ENCODE measurements at regions of chr9 and their contacts with region 1.

Region 1: DNA sequence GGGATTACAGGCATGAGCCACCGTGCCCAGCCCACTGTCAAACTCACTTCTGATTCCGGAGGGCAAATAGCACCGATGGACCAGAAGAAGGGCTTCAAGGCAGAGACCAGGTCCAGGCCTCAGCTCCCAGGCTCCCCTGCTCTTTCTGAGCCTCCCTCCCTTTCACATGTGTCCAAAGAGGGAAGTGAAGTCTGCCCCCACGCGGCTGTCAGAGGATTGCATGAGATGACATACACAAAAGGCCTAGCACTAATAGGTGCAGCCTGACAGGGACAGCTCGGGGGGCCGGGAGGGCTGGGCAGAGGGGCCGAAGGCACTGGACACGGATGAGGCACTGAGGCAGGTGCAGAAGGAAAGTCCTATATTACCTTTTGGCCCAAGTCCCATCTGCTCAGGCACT is 16.1 kb downstream of the FBP1 start:
- DNase-seq: peak; percentile 42 to 52 (median 48)
- H3K4me3 ChIP-seq: no peak overlapping the region
- H3K4me3 Mint-ChIP-seq: no peak overlapping the region
- H3K27ac ChIP-seq: no peak overlapping the region
- H3K27ac Mint-ChIP-seq: peak overlapping the region in 2 of 7 donors; percentile 14 to 45
- H3K4me1 ChIP-seq: no peaks in the 10 kb centered on the region
- H3K4me1 Mint-ChIP-seq: peaks cover 13% of the 10 kb centered on the region
- H3K27me3 ChIP-seq: no peaks in the 10 kb centered on the region
- H3K27me3 Mint-ChIP-seq: peaks cover 0 to 2% (median 0%) of the 10 kb centered on the region in 3 donors
- CTCF ChIP-seq: peak; percentile 69

Region 2: GRCh38 chr9:94663140-94663539 is 39.9 kb after region 1 on chr9:
- intact Hi-C with region 1: loop called (anchors 5 kb)
- DNase-seq: no peak
- H3K4me3 ChIP-seq: no peak overlapping the region
- H3K4me3 Mint-ChIP-seq: no peak overlapping the region
- H3K27ac ChIP-seq: no peak overlapping the region
- H3K27ac Mint-ChIP-seq: no peak overlapping the region
- H3K4me1 ChIP-seq: peaks cover 13 to 14% of the 10 kb centered on the region in 2 donors
- H3K4me1 Mint-ChIP-seq: peaks cover 25% of the 10 kb centered on the region
- H3K27me3 ChIP-seq: no peaks in the 10 kb centered on the region
- H3K27me3 Mint-ChIP-seq: peaks cover 0 to 3% (median 0%) of the 10 kb centered on the region in 3 donors
- CTCF ChIP-seq: no peak

Region 3: DNA sequence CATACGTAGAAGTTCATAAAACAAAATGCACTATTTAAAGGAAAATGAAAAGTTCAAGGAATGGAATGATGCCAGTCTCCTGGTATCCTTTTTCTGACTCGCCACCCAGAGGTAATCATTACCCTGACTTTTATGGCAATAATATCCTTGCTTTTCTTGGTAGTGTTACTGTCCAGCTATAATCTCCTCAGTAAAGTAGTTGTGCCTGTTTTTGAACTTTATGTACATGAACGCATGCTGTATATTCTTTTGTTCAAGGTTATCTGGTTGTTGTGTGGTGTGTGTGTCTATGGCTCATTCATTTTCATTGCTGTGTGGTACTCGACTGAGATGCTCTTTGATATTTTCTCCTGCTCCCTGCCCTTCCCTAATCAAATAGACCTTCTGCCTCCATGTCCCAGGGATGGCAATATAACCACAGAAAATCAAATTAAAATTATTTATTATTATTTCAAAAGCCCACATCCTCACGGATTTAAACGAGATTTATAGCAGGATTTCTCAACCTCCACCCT is 45.2 kb after region 1 on chr9:
- intact Hi-C with region 1: loop called (anchors 5 kb)
- DNase-seq: no peak
- H3K4me3 ChIP-seq: peak overlapping the region in 1 of 3 experiments; percentile 80
- H3K4me3 Mint-ChIP-seq: no peak overlapping the region
- H3K27ac ChIP-seq: no peak overlapping the region
- H3K27ac Mint-ChIP-seq: peak overlapping the region in 2 of 7 donors; percentile 16 to 71
- H3K4me1 ChIP-seq: peaks cover 20 to 25% of the 10 kb centered on the region in 2 donors
- H3K4me1 Mint-ChIP-seq: peaks cover 36% of the 10 kb centered on the region
- H3K27me3 ChIP-seq: no peaks in the 10 kb centered on the region
- H3K27me3 Mint-ChIP-seq: peaks cover 1 to 9% (median 4%) of the 10 kb centered on the region in 3 donors
- CTCF ChIP-seq: no peak

Measured in CD14-positive monocyte (primary cell).